ENCODE measurements at regions of chrX and their contacts with region 1.

Region 1: DNA sequence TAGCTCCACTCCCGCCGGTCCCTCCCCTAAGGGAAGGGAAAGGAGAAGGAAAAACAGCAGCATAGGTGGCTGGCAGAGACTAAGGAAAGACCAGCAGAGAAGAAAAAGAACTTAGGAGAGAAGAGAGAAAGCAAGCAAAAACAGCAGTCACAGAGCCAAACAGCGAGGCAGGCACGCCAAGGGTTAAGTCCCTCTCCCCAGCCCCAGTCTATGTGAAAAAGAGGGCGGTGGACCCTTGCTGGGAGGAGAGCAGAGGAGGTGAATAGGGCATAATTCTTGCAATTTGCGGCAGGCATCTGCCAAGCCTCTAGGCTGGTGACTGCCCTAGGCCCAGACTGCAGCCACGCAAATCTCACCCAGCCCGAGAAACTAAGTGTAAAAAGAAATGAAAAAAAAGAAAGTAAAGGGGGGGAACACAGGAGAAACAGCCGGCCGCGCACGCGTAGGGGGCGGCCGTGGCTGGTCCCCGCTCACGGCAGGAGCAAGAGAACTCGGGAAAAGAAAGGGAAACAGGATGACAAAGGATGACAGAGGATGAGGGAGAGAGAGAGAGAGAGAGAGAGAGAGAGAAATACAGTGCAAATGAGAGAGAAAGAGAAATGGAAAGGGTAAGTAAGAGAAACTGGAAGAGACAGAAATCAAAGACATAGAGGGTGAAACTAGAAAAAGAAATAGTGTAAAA is 48.6 kb downstream of the MAGEA9 start:
- DNase-seq: peak; percentile 42
- H3K4me3 ChIP-seq: peak overlapping the region; percentile 14 to 34 (median 30)
- H3K27ac ChIP-seq: peak overlapping the region; percentile 78
- H3K4me1 ChIP-seq: peaks cover 10% of the 10 kb centered on the region
- H3K27me3 ChIP-seq: no peaks in the 10 kb centered on the region
- CTCF ChIP-seq: no peak

Region 2: GRCh38 chrX:149916745-149917378 is 86.5 kb after region 1 on chrX:
- CTCF ChIA-PET with region 1: no interaction called
- dilution Hi-C with region 1: no loop called
- in situ Hi-C with region 1: no loop called
- intact Hi-C with region 1: no loop called
- DNase-seq: no peak
- H3K4me3 ChIP-seq: no peak overlapping the region
- H3K27ac ChIP-seq: no peak overlapping the region
- H3K4me1 ChIP-seq: no peaks in the 10 kb centered on the region
- H3K27me3 ChIP-seq: no peaks in the 10 kb centered on the region
- CTCF ChIP-seq: no peak

Region 3: GRCh38 chrX:149938427-149939270 is 108.3 kb after region 1 on chrX and contains the start of gene EOLA2:
- CTCF ChIA-PET with region 1: interaction called, 10 read pairs
- dilution Hi-C with region 1: no loop called
- in situ Hi-C with region 1: no loop called
- intact Hi-C with region 1: no loop called
- DNase-seq: peak; percentile 95
- H3K4me3 ChIP-seq: peak within 1 kb of the TSS; percentile 48 to 82 (median 54)
- H3K27ac ChIP-seq: peak within 1 kb of the TSS; percentile 82
- H3K4me1 ChIP-seq: no peaks in the 10 kb centered on the region
- H3K27me3 ChIP-seq: no peaks in the 10 kb centered on the region
- CTCF ChIP-seq: peak; percentile 41 to 74
- total RNA-seq, gene EOLA2: 32.8 to 39.8 TPM